Activated CD8-positive, alpha-beta memory T cell treated with anti-CD3 and anti-CD28 coated beads, Interleukin-2, amount 10 ng/mL, durations not matched to agents 7 days and 5 days (primary cell): ENCODE measurements at regions of chr7 and their contacts with region 1.

Region 1: GRCh38 chr7:92447345-92448204 is at the start of gene GATAD1:
- DNase-seq: peak; percentile 89
- ATAC-seq: peak; percentile 85
- H3K4me3 Mint-ChIP-seq: peak within 1 kb of the TSS; percentile 80
- H3K27ac Mint-ChIP-seq: peak within 1 kb of the TSS; percentile 88
- H3K4me1 Mint-ChIP-seq: peaks cover 11% of the 10 kb centered on the region
- H3K27me3 Mint-ChIP-seq: no peaks in the 10 kb centered on the region
- total RNA-seq, gene GATAD1: 18.3 to 21.0 TPM

Region 2: DNA sequence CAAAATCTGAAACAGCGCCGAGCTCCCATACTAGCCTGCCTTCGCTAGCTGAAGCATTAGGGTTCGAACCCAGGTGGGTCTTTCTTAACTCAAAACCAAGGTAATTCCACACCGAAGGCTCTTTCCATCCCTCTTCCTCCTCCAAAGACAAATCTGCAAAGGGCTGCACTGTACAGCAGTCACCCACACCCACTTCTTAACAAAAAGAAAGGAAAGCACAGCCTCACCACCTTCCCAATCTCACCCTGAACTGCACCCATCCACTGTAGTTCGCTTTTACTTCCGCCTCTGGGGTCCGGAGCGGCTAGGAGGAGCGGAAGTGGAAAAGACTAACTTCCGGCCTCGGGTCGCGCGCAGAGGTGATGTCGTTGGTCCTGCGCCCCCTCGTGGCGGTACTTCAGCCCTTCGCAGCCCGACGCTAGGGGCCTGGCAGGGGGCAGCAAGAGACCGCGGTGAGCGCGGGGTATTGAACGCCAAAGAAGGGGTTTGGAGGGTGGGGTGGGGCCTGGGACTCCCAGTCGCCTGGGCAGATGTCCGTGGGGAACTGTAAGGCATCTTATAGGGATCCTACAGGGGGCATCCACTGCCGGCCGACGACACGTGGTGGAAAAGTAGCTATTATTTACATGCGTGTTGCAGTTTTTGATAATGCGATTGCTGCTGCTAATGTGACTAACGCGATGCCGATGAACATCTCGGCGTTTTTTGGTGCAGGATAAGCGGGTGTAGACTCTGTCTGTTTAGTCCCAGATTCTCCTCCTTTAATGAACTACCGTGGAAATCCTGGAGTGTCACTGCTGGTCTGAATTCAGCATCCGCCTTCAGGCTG is 566.9 kb before region 1 on chr7 and contains the start of gene MTERF1:
- CTCF ChIA-PET with region 1: interaction called, 14 read pairs
- DNase-seq: peak; percentile 94
- ATAC-seq: peak; percentile 98
- H3K4me3 Mint-ChIP-seq: peak within 1 kb of the TSS; percentile 88
- H3K27ac Mint-ChIP-seq: peak within 1 kb of the TSS; percentile 95
- H3K4me1 Mint-ChIP-seq: peaks cover 33% of the 10 kb centered on the region
- H3K27me3 Mint-ChIP-seq: no peaks in the 10 kb centered on the region
- total RNA-seq, gene MTERF1: 14.9 to 17.4 TPM

Region 3: GRCh38 chr7:92245487-92246362 is 201.8 kb before region 1 on chr7 and contains the starts of genes ANKIB1 and KRIT1:
- CTCF ChIA-PET with region 1: interaction called, 31 read pairs
- DNase-seq: peak; percentile 94
- ATAC-seq: peak; percentile 80
- H3K4me3 Mint-ChIP-seq: peak within 1 kb of the TSS; percentile 90
- H3K27ac Mint-ChIP-seq: peak within 1 kb of the TSS; percentile 100
- H3K4me1 Mint-ChIP-seq: peaks cover 43% of the 10 kb centered on the region
- H3K27me3 Mint-ChIP-seq: no peaks in the 10 kb centered on the region
- total RNA-seq, gene ANKIB1: 55.2 to 73.3 TPM
- total RNA-seq, gene KRIT1: 45.4 to 46.4 TPM

Region 4: DNA sequence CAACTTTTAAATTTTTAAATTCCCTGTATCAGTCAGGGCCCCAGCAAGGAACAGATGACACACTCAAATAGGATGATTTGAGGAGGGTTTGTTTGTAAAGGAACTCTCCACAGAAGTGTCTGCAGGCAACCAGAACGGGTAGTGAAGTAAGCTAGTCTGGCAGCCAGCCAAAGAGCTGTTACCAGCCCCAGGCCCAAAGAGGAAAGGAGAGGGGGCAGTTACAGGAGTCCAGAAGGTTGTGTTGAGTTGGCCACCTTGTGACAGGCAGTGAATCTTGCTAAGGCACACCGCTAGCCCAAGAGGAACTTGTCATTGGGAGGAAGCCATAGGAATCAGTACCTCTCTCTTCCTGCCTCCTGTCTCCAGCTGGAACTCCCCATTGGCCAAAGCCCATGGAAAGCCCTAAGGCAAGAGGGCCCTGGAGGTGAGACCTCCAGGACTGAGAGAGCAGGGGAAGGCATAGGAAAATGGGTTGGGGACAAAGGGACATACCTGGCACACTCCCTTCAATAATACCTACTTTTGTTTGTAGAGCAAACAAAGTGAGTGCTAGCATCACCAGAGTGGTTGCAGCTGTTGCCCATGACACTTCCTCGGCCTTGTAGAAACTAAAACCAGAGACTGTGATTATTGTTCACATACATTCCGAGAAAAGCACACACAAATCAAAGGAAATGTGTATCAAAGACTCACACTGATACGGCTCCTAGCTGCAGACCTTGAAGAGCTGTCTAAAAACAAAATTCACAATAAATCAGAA is 25.7 kb before region 1 on chr7:
- CTCF ChIA-PET with region 1: interaction called, 109 read pairs
- DNase-seq: no peak
- ATAC-seq: no peak
- H3K4me3 Mint-ChIP-seq: no peak overlapping the region
- H3K27ac Mint-ChIP-seq: no peak overlapping the region
- H3K4me1 Mint-ChIP-seq: peaks cover 32% of the 10 kb centered on the region
- H3K27me3 Mint-ChIP-seq: peaks cover 9% of the 10 kb centered on the region

Region 5: GRCh38 chr7:92528188-92528957 is 80.8 kb after region 1 on chr7 and contains the starts of genes PEX1 and RBM48:
- CTCF ChIA-PET with region 1: interaction called, 24 read pairs
- DNase-seq: peak; percentile 98
- ATAC-seq: peak; percentile 95
- H3K4me3 Mint-ChIP-seq: peak within 1 kb of the TSS; percentile 85
- H3K27ac Mint-ChIP-seq: peak within 1 kb of the TSS; percentile 97
- H3K4me1 Mint-ChIP-seq: peaks cover 35% of the 10 kb centered on the region
- H3K27me3 Mint-ChIP-seq: no peaks in the 10 kb centered on the region
- total RNA-seq, gene PEX1: 16.8 to 18.4 TPM
- total RNA-seq, gene RBM48: 18.5 to 19.0 TPM